Endothelial cell of umbilical vein (primary cell): ENCODE measurements at regions of chr10 and their contacts with region 1.

Region 1: DNA sequence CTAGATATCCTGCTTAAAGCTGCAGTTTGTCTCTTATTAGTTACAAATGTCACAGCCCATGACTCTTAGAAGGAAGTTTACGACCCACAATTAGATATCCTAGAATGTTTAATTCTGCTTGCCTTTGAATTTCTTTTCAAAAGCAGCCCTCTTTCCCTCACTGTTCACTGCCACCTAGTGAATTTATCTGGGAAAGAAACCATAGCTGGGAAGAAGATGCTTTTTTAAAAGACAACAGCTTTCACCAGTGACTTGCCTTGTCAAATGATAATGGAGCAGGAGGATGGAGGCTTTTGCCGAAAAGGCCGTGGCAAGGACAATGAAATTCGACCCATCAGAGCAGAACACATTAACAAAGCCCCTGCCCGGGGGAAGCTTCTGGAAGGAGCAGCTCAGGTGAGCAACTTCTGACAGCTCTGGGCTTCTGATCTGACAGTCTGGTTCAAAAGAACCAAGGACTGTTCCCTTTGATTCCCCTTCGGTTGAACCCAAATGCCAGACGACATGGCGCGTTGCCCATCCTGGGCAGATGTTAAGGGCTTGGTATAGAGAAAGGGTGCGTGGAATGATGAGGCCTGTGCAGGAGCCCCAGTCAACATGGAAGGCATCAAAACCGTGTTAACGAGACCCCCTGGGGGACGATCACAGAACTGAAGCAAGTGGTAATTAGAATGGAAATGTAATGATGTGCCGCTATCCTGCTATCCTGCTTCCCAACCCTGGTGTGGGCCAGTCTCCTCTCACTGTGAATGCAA is 236.8 kb downstream of the FRMD4A start:
- DNase-seq: peak; percentile 68
- H3K4me3 ChIP-seq: no peak overlapping the region
- H3K27ac ChIP-seq: no peak overlapping the region
- H3K4me1 ChIP-seq: peaks cover 6% of the 10 kb centered on the region
- H3K27me3 ChIP-seq: no peaks in the 10 kb centered on the region
- CTCF ChIP-seq: peak; percentile 41 to 45
- POLR2A ChIP-seq: no peak

Region 2: GRCh38 chr10:13859979-13860654 is 233.8 kb before region 1 on chr10:
- CTCF ChIA-PET with region 1: interaction called, 16 read pairs
- POLR2A ChIA-PET with region 1: no interaction called
- dilution Hi-C with region 1: no loop called
- intact Hi-C with region 1: no loop called
- DNase-seq: peak; percentile 84
- H3K4me3 ChIP-seq: peak overlapping the region in 1 of 3 experiments; percentile 24
- H3K27ac ChIP-seq: peak overlapping the region; percentile 73
- H3K4me1 ChIP-seq: peaks cover 81% of the 10 kb centered on the region
- H3K27me3 ChIP-seq: no peaks in the 10 kb centered on the region
- CTCF ChIP-seq: no peak
- POLR2A ChIP-seq: peak; percentile 40

Region 3: GRCh38 chr10:13949844-13950595 is 143.9 kb before region 1 on chr10:
- CTCF ChIA-PET with region 1: interaction called, 4 read pairs
- POLR2A ChIA-PET with region 1: no interaction called
- dilution Hi-C with region 1: no loop called
- intact Hi-C with region 1: loop called (anchors 2 kb)
- DNase-seq: peak; percentile 22
- H3K4me3 ChIP-seq: no peak overlapping the region
- H3K27ac ChIP-seq: no peak overlapping the region
- H3K4me1 ChIP-seq: peaks cover 33% of the 10 kb centered on the region
- H3K27me3 ChIP-seq: no peaks in the 10 kb centered on the region
- CTCF ChIP-seq: no peak
- POLR2A ChIP-seq: no peak

Region 4: GRCh38 chr10:13961097-13961496 is 132.8 kb before region 1 on chr10:
- CTCF ChIA-PET with region 1: interaction called, 7 read pairs
- POLR2A ChIA-PET with region 1: no interaction called
- dilution Hi-C with region 1: no loop called
- intact Hi-C with region 1: loop called (anchors 1 kb)
- DNase-seq: peak; percentile 47
- H3K4me3 ChIP-seq: no peak overlapping the region
- H3K27ac ChIP-seq: no peak overlapping the region
- H3K4me1 ChIP-seq: peaks cover 20% of the 10 kb centered on the region
- H3K27me3 ChIP-seq: no peaks in the 10 kb centered on the region
- CTCF ChIP-seq: no peak
- POLR2A ChIP-seq: no peak

Region 5: DNA sequence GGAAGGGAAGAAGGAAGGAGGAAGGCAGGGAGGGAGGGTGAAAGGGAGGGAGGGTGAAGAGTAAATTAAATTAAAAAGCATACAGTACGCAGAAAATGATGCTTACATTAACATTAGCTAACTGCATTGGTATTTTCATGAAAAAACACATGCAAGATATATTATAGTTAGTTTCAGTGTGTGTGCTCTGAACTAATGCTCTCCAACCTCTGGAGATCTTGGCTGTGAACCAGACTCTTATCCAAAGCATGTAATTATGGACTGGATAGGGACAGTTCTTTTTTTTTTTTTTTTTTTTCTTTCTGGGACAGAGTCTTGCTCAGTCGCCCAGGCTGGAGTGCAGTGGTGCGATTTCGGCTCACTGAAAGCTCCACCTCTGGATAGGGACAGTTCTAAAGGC is 120.2 kb before region 1 on chr10:
- CTCF ChIA-PET with region 1: interaction called, 11 read pairs
- POLR2A ChIA-PET with region 1: no interaction called
- dilution Hi-C with region 1: no loop called
- intact Hi-C with region 1: no loop called
- DNase-seq: peak; percentile 29
- H3K4me3 ChIP-seq: no peak overlapping the region
- H3K27ac ChIP-seq: no peak overlapping the region
- H3K4me1 ChIP-seq: peaks cover 24% of the 10 kb centered on the region
- H3K27me3 ChIP-seq: no peaks in the 10 kb centered on the region
- CTCF ChIP-seq: no peak
- POLR2A ChIP-seq: no peak

Region 6: GRCh38 chr10:14032395-14032998 is 61.4 kb before region 1 on chr10:
- CTCF ChIA-PET with region 1: interaction called, 21 read pairs
- POLR2A ChIA-PET with region 1: no interaction called
- dilution Hi-C with region 1: no loop called
- intact Hi-C with region 1: loop called (anchors 1 kb)
- DNase-seq: peak; percentile 41
- H3K4me3 ChIP-seq: no peak overlapping the region
- H3K27ac ChIP-seq: no peak overlapping the region
- H3K4me1 ChIP-seq: peaks cover 14% of the 10 kb centered on the region
- H3K27me3 ChIP-seq: no peaks in the 10 kb centered on the region
- CTCF ChIP-seq: peak; percentile 89 to 93
- POLR2A ChIP-seq: no peak

Region 7: GRCh38 chr10:14074057-14074884 is 19.6 kb before region 1 on chr10:
- CTCF ChIA-PET with region 1: interaction called, 24 read pairs
- POLR2A ChIA-PET with region 1: no interaction called
- dilution Hi-C with region 1: no loop called
- intact Hi-C with region 1: loop called (anchors 2 kb)
- DNase-seq: peak; percentile 98
- H3K4me3 ChIP-seq: no peak overlapping the region
- H3K27ac ChIP-seq: peak overlapping the region; percentile 81
- H3K4me1 ChIP-seq: peaks cover 43% of the 10 kb centered on the region
- H3K27me3 ChIP-seq: no peaks in the 10 kb centered on the region
- CTCF ChIP-seq: no peak
- POLR2A ChIP-seq: no peak